GM12878 (cell line): ENCODE measurements at regions of chr10 and their contacts with region 1.

Region 1: GRCh38 chr10:73644015-73644743 is 2.9 kb upstream of the MYOZ1 start:
- DNase-seq: peak; percentile 53
- ATAC-seq: peak; percentile 87
- H3K4me3 ChIP-seq: no peak overlapping the region
- H3K27ac ChIP-seq: peak overlapping the region; percentile 27; the same call in 1 of the 2 replicates
- H3K4me1 ChIP-seq: peaks cover 18% of the 10 kb centered on the region
- H3K27me3 ChIP-seq: no peaks in the 10 kb centered on the region
- CTCF ChIP-seq: peak; percentile 79 to 91 (median 81); a peak in 5 of 6 replicates
- EP300 ChIP-seq: no peak
- POLR2A ChIP-seq: no peak
- RAD21 ChIP-seq: peak; percentile 86

Region 2: DNA sequence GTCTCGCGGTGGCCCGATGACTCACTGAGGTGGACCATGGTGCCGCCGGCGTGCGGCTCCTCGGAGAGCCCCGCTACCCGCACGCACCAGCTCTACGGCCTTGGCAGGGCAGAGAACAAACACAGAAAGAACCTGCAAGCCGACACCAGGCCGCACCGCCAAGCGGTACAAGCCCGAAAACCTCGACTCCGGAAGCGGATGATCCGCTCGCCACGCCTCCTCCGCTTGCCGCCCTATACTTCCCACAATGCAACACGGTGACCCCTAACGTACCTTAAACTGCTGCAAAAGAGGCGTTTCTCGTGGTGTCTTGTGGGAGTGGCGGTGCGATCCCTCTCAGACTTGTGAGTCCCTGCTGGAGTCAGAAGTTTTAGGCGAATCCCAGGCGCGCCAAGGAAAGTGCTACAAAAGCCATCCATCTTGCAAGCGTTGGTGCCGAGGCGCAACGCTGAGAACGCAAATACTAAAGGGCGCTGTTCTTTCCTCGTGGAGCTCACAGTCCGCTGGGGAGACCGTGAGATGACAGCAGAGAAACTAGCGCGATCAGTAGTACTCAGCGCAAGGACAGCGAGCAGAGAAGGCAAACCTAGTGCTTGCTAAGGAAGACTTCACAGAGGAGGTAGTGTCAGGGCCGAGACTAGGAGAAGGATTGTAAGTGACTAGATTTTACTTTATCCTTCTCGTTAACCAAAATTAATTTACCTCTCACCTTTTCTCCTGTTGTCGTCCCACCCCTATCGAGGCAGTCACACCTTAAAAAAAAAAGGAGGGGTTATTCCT is 391.5 kb before region 1 on chr10 and contains the start of gene MRPS16:
- CTCF ChIA-PET with region 1: interaction called, 4 read pairs
- POLR2A ChIA-PET with region 1: no interaction called
- RAD21 ChIA-PET with region 1: no interaction called
- SMC1A ChIA-PET with region 1: interaction called, 3 read pairs
- in situ Hi-C with region 1: loop called (anchors 5 kb)
- intact Hi-C with region 1: no loop called
- DNase-seq: peak; percentile 88
- ATAC-seq: peak; percentile 87
- H3K4me3 ChIP-seq: peak within 1 kb of the TSS; percentile 93
- H3K27ac ChIP-seq: peak within 1 kb of the TSS; percentile 97
- H3K4me1 ChIP-seq: peaks cover 11% of the 10 kb centered on the region
- H3K27me3 ChIP-seq: no peaks in the 10 kb centered on the region
- CTCF ChIP-seq: no peak
- EP300 ChIP-seq: no peak
- POLR2A ChIP-seq: peak; percentile 99
- RAD21 ChIP-seq: no peak
- polyA plus RNA-seq, gene MRPS16: 43.4 to 98.5 TPM

Region 3: GRCh38 chr10:73517271-73517877 is 126.8 kb before region 1 on chr10:
- CTCF ChIA-PET with region 1: interaction called, 14 read pairs
- POLR2A ChIA-PET with region 1: interaction called, 5 read pairs
- RAD21 ChIA-PET with region 1: interaction called, 5 read pairs
- SMC1A ChIA-PET with region 1: interaction called, 9 read pairs
- in situ Hi-C with region 1: no loop called
- intact Hi-C with region 1: no loop called
- DNase-seq: no peak
- ATAC-seq: no peak
- H3K4me3 ChIP-seq: no peak overlapping the region
- H3K27ac ChIP-seq: no peak overlapping the region
- H3K4me1 ChIP-seq: no peaks in the 10 kb centered on the region
- H3K27me3 ChIP-seq: no peaks in the 10 kb centered on the region
- CTCF ChIP-seq: no peak
- EP300 ChIP-seq: no peak
- POLR2A ChIP-seq: no peak
- RAD21 ChIP-seq: no peak

Region 4: GRCh38 chr10:73537288-73537687 is 106.9 kb before region 1 on chr10:
- CTCF ChIA-PET with region 1: interaction called, 15 read pairs
- POLR2A ChIA-PET with region 1: interaction called, 3 read pairs
- RAD21 ChIA-PET with region 1: interaction called, 3 read pairs
- SMC1A ChIA-PET with region 1: interaction called, 134 read pairs
- in situ Hi-C with region 1: loop called (anchors 5 kb)
- intact Hi-C with region 1: no loop called
- DNase-seq: no peak
- ATAC-seq: no peak
- H3K4me3 ChIP-seq: no peak overlapping the region
- H3K27ac ChIP-seq: no peak overlapping the region
- H3K4me1 ChIP-seq: no peaks in the 10 kb centered on the region
- H3K27me3 ChIP-seq: no peaks in the 10 kb centered on the region
- CTCF ChIP-seq: no peak
- EP300 ChIP-seq: no peak
- POLR2A ChIP-seq: no peak
- RAD21 ChIP-seq: no peak

Region 5: GRCh38 chr10:73625884-73626752 is 18.1 kb before region 1 on chr10:
- CTCF ChIA-PET with region 1: interaction called, 60 read pairs
- POLR2A ChIA-PET with region 1: interaction called, 3 read pairs
- RAD21 ChIA-PET with region 1: interaction called, 33 read pairs
- SMC1A ChIA-PET with region 1: interaction called, 38 read pairs
- in situ Hi-C with region 1: no loop called
- intact Hi-C with region 1: no loop called
- DNase-seq: peak; percentile 98
- ATAC-seq: peak; percentile 98
- H3K4me3 ChIP-seq: peak overlapping the region; percentile 87
- H3K27ac ChIP-seq: peak overlapping the region; percentile 95
- H3K4me1 ChIP-seq: peaks cover 5% of the 10 kb centered on the region
- H3K27me3 ChIP-seq: no peaks in the 10 kb centered on the region
- CTCF ChIP-seq: no peak
- EP300 ChIP-seq: 0 out of 4 replicates have a peak, but pooled peaks of 1 of the 2 experiments have one; percentile 10
- POLR2A ChIP-seq: peak; percentile 95
- RAD21 ChIP-seq: no peak

Region 6: DNA sequence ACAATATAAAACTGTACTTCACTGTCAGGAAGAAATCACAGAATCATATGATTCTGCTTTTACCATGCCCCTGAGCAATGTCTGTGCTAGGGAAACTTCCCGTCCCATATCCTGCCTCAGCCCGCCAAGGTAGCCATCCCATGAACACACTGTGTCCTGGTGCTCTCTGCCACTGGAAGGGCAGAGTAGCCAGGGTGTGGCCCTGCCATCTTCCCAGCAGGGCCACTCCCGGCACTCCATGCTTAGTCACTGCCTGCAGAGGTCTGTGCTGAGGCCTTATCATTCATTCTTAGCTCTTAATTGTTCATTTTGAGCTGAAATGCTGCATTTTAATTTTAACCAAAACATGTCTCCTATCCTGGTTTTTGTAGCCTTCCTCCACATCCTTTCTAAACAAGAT is 474.6 kb after region 1 on chr10:
- CTCF ChIA-PET with region 1: no interaction called
- POLR2A ChIA-PET with region 1: no interaction called
- RAD21 ChIA-PET with region 1: no interaction called
- SMC1A ChIA-PET with region 1: no interaction called
- in situ Hi-C with region 1: no loop called
- intact Hi-C with region 1: no loop called
- DNase-seq: no peak
- ATAC-seq: no peak
- H3K4me3 ChIP-seq: no peak overlapping the region
- H3K27ac ChIP-seq: no peak overlapping the region
- H3K4me1 ChIP-seq: peaks cover 10% of the 10 kb centered on the region
- H3K27me3 ChIP-seq: no peaks in the 10 kb centered on the region
- CTCF ChIP-seq: no peak
- EP300 ChIP-seq: no peak
- POLR2A ChIP-seq: no peak
- RAD21 ChIP-seq: no peak